A549 (cell line): ENCODE measurements at regions of chr9 and their contacts with region 1.

Region 1: DNA sequence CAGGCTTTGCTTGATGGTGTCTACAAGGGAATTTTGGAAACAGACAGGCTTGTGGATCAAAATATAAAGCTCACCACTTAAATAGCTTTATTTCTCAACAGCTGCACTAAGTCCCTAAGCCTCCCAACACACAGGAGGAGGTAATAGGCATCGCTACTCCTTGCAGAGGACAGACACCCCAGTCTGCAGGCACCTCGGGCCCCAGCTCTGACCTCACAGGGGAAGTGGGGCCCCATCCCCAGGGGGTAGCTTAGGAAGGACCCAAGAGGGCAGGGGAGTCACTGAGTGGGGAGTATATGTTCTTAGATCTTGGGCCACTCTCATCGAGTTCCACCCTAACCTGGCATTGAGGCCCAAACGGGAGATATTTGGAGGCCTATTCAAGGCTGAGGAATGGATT is 66.7 kb upstream of the XPA start:
- DNase-seq: no peak
- ATAC-seq: no peak
- H3K4me3 ChIP-seq: no peak overlapping the region
- H3K27ac ChIP-seq: no peak overlapping the region
- H3K4me1 ChIP-seq: peaks cover 22% of the 10 kb centered on the region
- CTCF ChIP-seq: no peak
- EP300 ChIP-seq: no peak
- POLR2A ChIP-seq: no peak
- RAD21 ChIP-seq: no peak

Region 2: DNA sequence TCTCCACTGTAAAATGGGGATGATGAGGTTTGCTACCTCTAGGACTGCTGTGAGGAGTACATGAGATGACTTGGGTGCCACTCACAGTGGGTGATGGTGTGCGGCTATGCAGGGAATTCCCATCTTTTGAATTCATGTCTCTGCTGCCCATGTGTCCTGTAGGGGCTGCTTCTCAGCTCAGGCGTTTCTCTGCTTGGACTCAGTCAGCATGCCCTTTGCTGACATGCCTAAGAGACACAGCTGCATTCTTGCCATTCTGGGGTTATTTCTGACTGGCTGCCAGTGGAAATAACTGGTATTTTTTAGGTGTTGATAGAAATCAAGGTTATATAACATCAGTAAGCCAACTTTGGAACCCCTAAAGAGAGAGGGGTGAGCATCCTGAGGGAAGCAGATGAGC is 42.5 kb before region 1 on chr9:
- CTCF ChIA-PET with region 1: no interaction called
- POLR2A ChIA-PET with region 1: no interaction called
- DNase-seq: no peak
- ATAC-seq: no peak
- H3K4me3 ChIP-seq: no peak overlapping the region
- H3K27ac ChIP-seq: no peak overlapping the region
- H3K4me1 ChIP-seq: 0 out of 3 replicates have a peak, but pooled peaks cover 3% of the 10 kb centered on the region
- CTCF ChIP-seq: no peak
- EP300 ChIP-seq: no peak
- POLR2A ChIP-seq: no peak
- RAD21 ChIP-seq: no peak

Region 3: DNA sequence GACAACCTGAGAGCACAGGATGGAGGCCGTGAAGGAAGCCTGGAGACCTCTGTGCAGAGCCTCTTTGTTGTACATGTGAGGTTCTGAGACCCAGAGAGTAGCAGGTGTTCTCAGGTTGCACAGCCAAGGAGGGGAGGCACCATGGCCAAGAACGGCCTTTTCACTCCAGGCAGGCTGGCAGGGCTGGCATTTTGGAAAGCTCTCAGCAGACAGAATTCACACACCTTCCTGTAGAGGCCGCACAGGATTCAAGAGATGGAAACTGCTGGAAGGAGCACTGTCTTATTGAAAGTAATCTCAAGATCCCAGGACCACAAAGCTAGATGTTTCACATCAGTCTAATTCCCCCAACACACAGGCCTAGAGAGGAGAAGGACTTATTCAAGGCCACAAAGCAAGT is 13.9 kb before region 1 on chr9:
- CTCF ChIA-PET with region 1: interaction called, 12 read pairs
- POLR2A ChIA-PET with region 1: no interaction called
- DNase-seq: peak in 1 of 2 experiments; percentile 17
- ATAC-seq: peak in 1 of 2 experiments; percentile 60; a peak in 3 of 6 replicates
- H3K4me3 ChIP-seq: no peak overlapping the region
- H3K27ac ChIP-seq: 0 out of 6 replicates have a peak overlapping the region, but pooled peaks of 1 of the 2 experiments have one; percentile 1
- H3K4me1 ChIP-seq: peaks cover 18% of the 10 kb centered on the region; the same call in 2 of the 3 replicates
- CTCF ChIP-seq: peak; percentile 11; the same call in 1 of the 3 replicates
- EP300 ChIP-seq: no peak
- POLR2A ChIP-seq: no peak
- RAD21 ChIP-seq: peak in 1 of 2 experiments; percentile 19; a peak in 2 of 5 replicates

Region 4: GRCh38 chr9:97774673-97775072 is 10.8 kb after region 1 on chr9:
- CTCF ChIA-PET with region 1: no interaction called
- POLR2A ChIA-PET with region 1: no interaction called
- DNase-seq: no peak
- ATAC-seq: no peak
- H3K4me3 ChIP-seq: no peak overlapping the region
- H3K27ac ChIP-seq: no peak overlapping the region
- H3K4me1 ChIP-seq: no peaks in the 10 kb centered on the region
- CTCF ChIP-seq: no peak
- EP300 ChIP-seq: no peak
- POLR2A ChIP-seq: no peak
- RAD21 ChIP-seq: no peak